Activated naive CD4-positive, alpha-beta T cell treated with anti-CD3 and anti-CD28 coated beads for 36 hours (primary cell): ENCODE measurements at regions of chr2 and their contacts with region 1.

Region 1: DNA sequence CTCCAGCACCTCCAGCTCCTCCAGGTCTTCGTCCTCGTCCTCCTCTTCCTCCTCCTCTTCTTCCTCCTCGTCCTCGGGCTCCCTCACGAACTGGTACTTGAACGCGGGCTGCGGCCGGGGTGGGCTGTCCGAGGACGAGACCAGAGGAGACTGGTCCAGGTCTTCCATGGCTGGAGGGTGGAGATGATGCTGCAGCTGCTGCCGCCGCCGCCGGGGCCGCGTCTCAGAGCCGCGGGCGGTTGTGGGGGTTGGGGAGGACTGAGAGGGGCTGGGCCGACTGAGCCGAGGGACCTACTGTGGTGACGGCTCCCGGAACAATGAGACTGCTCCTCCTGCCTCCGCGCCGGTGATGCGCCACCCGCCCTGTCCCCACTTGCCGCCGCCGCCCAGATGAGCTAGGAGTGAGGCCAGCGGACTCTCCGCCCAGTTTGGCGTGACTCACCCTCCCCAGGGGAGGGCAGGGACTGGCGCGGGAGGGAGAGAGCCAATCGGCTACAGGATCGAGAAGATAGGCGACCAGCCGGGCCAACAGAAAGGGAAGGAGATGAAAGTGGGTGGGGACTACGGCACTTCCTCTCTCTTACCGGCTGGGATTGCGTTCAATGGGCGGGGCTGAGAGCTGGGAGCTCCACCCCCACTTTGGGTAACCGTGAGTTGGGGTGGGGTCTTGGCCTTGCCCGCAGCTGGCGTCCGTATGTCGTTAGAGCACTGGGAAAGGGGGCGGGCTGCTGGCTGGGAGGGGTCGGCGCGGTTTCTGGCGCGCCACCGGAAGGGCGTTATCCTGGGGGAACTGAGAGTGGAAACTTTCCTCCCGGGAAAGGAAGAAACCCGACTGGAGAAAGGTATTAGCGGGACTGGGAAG is at the start of gene RTN4:
- DNase-seq: peak; percentile 99
- H3K4me3 Mint-ChIP-seq: peak within 1 kb of the TSS; percentile 97
- H3K27ac Mint-ChIP-seq: peak within 1 kb of the TSS; percentile 97
- H3K4me1 Mint-ChIP-seq: peaks cover 58% of the 10 kb centered on the region
- H3K27me3 Mint-ChIP-seq: no peaks in the 10 kb centered on the region
- total RNA-seq, gene RTN4: 76.4 to 76.7 TPM

Region 2: GRCh38 chr2:54115284-54116137 is 934.9 kb before region 1 on chr2 and contains the start of gene ACYP2:
- CTCF ChIA-PET with region 1: no interaction called
- intact Hi-C with region 1: loop called (anchors 2 kb)
- DNase-seq: peak; percentile 95
- H3K4me3 Mint-ChIP-seq: peak within 1 kb of the TSS; percentile 97
- H3K27ac Mint-ChIP-seq: peak within 1 kb of the TSS; percentile 100
- H3K4me1 Mint-ChIP-seq: peaks cover 11% of the 10 kb centered on the region
- H3K27me3 Mint-ChIP-seq: no peaks in the 10 kb centered on the region
- total RNA-seq, gene ACYP2: 6.8 to 7.3 TPM

Region 3: DNA sequence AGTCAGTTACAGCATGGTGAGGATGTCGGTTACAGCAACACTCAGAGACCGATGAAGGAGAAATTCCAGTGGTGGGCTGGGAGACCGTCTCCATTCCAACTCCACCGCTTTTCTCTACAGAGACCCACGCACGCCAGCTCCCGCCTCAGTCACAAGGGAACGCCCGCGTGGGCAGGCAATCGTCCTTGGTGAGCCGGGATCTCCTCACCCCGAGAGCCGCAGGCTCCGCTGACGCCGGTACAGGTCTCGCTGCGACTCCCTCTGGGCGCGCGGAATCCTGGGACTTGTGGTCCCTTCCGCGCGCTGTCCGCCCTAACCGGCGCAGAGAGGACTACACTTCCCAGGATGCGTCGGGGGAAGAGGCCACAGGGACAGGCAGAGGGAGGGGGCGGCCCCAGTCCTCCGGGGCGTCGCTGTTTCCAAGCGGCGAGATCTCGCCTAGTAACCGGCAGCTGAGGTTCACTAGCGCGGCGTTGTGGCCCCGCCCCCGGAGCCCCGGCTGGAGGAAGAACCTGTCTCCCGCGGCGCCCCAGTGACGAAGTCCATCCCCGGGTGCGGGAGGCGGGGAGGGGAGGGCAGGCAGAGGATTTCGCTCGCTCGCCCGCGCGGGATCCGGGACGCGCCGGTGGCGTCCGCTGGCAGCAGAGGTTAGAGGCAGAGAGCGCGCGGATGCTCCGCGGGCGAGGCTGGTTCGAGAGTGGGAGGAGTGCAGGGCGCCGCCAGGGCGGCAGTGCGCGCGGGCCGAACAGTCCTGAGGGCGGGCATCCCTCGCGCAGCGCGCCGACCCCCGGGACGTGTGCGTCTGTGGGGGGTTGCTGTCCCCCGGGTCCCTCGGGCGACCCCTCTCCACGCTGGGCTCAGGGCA is 327.0 kb before region 1 on chr2 and contains the start of gene EML6:
- CTCF ChIA-PET with region 1: no interaction called
- intact Hi-C with region 1: loop called (anchors 1 kb)
- DNase-seq: peak; percentile 99
- H3K4me3 Mint-ChIP-seq: peak within 1 kb of the TSS; percentile 90
- H3K27ac Mint-ChIP-seq: no peak within 1 kb of the TSS
- H3K4me1 Mint-ChIP-seq: peaks cover 13% of the 10 kb centered on the region
- H3K27me3 Mint-ChIP-seq: peaks cover 32% of the 10 kb centered on the region
- total RNA-seq, gene EML6: 0.38 to 0.49 TPM

Region 4: GRCh38 chr2:55026202-55026601 is 24.2 kb before region 1 on chr2:
- CTCF ChIA-PET with region 1: interaction called, 17 read pairs
- intact Hi-C with region 1: loop called (anchors 1 kb)
- DNase-seq: no peak
- H3K4me3 Mint-ChIP-seq: no peak overlapping the region
- H3K27ac Mint-ChIP-seq: peak overlapping the region; percentile 18
- H3K4me1 Mint-ChIP-seq: peaks cover 12% of the 10 kb centered on the region
- H3K27me3 Mint-ChIP-seq: no peaks in the 10 kb centered on the region

Region 5: GRCh38 chr2:55223958-55224760 is 173.8 kb after region 1 on chr2:
- CTCF ChIA-PET with region 1: no interaction called
- intact Hi-C with region 1: loop called (anchors 2 kb)
- DNase-seq: no peak
- H3K4me3 Mint-ChIP-seq: peak overlapping the region; percentile 71
- H3K27ac Mint-ChIP-seq: peak overlapping the region; percentile 68
- H3K4me1 Mint-ChIP-seq: peaks cover 36% of the 10 kb centered on the region
- H3K27me3 Mint-ChIP-seq: no peaks in the 10 kb centered on the region

Region 6: GRCh38 chr2:55519938-55520885 is 469.8 kb after region 1 on chr2:
- CTCF ChIA-PET with region 1: interaction called, 3 read pairs
- intact Hi-C with region 1: loop called (anchors 1 kb)
- DNase-seq: peak; percentile 45
- H3K4me3 Mint-ChIP-seq: peak overlapping the region; percentile 99
- H3K27ac Mint-ChIP-seq: peak overlapping the region; percentile 96
- H3K4me1 Mint-ChIP-seq: peaks cover 14% of the 10 kb centered on the region
- H3K27me3 Mint-ChIP-seq: no peaks in the 10 kb centered on the region